Mammary epithelial cell (primary cell): ENCODE measurements at regions of chr9 and their contacts with region 1.

Region 1: GRCh38 chr9:131277910-131278701 is 1.8 kb upstream of the FAM78A start:
- DNase-seq: peak; percentile 60
- H3K4me3 ChIP-seq: peak overlapping the region; percentile 30 to 52 (median 47)
- H3K27ac ChIP-seq: no peak overlapping the region
- H3K4me1 ChIP-seq: no peaks in the 10 kb centered on the region
- H3K27me3 ChIP-seq: peaks cover 16% of the 10 kb centered on the region
- CTCF ChIP-seq: no peak

Region 2: GRCh38 chr9:130785940-130786508 is 492.1 kb before region 1 on chr9:
- CTCF ChIA-PET with region 1: no interaction called
- dilution Hi-C with region 1: no loop called
- in situ Hi-C with region 1: no loop called
- intact Hi-C with region 1: no loop called
- DNase-seq: no peak
- H3K4me3 ChIP-seq: no peak overlapping the region
- H3K27ac ChIP-seq: no peak overlapping the region
- H3K4me1 ChIP-seq: no peaks in the 10 kb centered on the region
- H3K27me3 ChIP-seq: no peaks in the 10 kb centered on the region
- CTCF ChIP-seq: no peak

Region 3: GRCh38 chr9:131260751-131261452 is 17.2 kb before region 1 on chr9:
- CTCF ChIA-PET with region 1: interaction called, 11 read pairs
- dilution Hi-C with region 1: no loop called
- in situ Hi-C with region 1: no loop called
- intact Hi-C with region 1: no loop called
- DNase-seq: no peak
- H3K4me3 ChIP-seq: no peak overlapping the region
- H3K27ac ChIP-seq: no peak overlapping the region
- H3K4me1 ChIP-seq: peaks cover 8% of the 10 kb centered on the region
- H3K27me3 ChIP-seq: no peaks in the 10 kb centered on the region
- CTCF ChIP-seq: no peak